CD8-positive, alpha-beta memory T cell (primary cell): ENCODE measurements at regions of chr3 and their contacts with region 1.

Region 1: GRCh38 chr3:48635222-48636021 is at the start of gene SLC26A6:
- DNase-seq: peak; percentile 87 to 93 (median 91)
- H3K4me3 ChIP-seq: peak within 1 kb of the TSS; percentile 71
- H3K4me3 Mint-ChIP-seq: peak within 1 kb of the TSS; percentile 85 to 97 (median 89)
- H3K27ac ChIP-seq: peak within 1 kb of the TSS; percentile 65
- H3K27ac Mint-ChIP-seq: peak within 1 kb of the TSS in 6 of 8 donors; percentile 50 to 94 (median 84)
- H3K4me1 ChIP-seq: peaks cover 18% of the 10 kb centered on the region
- H3K4me1 Mint-ChIP-seq: peaks cover 11 to 31% (median 18%) of the 10 kb centered on the region in 3 donors
- H3K27me3 ChIP-seq: no peaks in the 10 kb centered on the region
- H3K27me3 Mint-ChIP-seq: peaks cover 0 to 1% of the 10 kb centered on the region in 2 donors
- total RNA-seq, gene SLC26A6: 26.4 to 28.6 TPM

Region 2: GRCh38 chr3:48656061-48656840 is 20.8 kb after region 1 on chr3:
- CTCF ChIA-PET with region 1: interaction called, 15 read pairs
- POLR2A ChIA-PET with region 1: interaction called, 4 read pairs
- DNase-seq: peak; percentile 77 to 89 (median 87)
- H3K4me3 ChIP-seq: peak overlapping the region; percentile 53
- H3K4me3 Mint-ChIP-seq: peak overlapping the region; percentile 80 to 91 (median 84)
- H3K27ac ChIP-seq: peak overlapping the region; percentile 57
- H3K27ac Mint-ChIP-seq: peak overlapping the region; percentile 78 to 95 (median 88)
- H3K4me1 ChIP-seq: peaks cover 13% of the 10 kb centered on the region
- H3K4me1 Mint-ChIP-seq: peaks cover 4 to 30% (median 5%) of the 10 kb centered on the region in 3 donors
- H3K27me3 ChIP-seq: no peaks in the 10 kb centered on the region
- H3K27me3 Mint-ChIP-seq: peaks cover 3 to 9% of the 10 kb centered on the region in 2 donors